GM13977 (cell line): ENCODE measurements at regions of chr18 and their contacts with region 1.

Region 1: GRCh38 chr18:31722369-31722957 is 38.1 kb upstream of the B4GALT6 start:
- DNase-seq: peak; percentile 85
- CTCF ChIP-seq: peak; percentile 84

Region 2: DNA sequence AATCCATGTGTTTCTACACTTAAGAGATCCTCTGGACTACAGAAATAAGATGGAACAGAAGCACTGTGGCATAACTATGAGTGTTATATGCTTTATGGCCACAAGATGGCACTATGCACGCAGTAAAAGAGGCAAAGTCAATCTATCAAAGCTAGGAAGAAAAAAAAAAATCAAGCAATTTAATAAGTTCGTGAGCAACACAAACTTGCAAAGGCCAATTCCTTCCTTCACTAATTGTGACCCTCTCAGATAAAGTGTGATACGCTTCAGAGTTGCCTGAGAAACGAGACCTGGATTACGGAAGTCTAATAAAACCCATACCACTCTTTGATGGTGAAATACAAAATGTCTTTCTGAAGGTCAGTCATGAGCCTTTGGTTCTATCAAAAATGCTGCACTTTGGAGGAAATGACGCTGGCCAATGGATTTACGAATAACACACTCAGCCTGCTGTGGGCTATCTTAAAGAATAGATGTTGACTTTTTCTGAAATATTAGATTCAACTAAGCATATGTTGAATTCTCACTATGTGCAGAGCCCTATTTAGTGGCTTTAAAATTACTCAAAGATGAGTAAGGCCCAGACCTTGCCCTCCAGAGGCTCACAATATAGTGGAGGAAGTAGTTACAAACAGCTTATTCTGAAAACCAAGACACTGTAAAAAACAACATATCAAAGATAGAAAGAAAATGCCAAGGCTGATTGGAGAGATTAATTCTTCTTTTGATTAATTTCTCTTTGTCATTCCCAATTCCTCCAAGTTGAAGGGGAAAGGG is 166.3 kb before region 1 on chr18:
- in situ Hi-C with region 1: loop called (anchors 10 kb)
- DNase-seq: peak; percentile 54
- CTCF ChIP-seq: peak; percentile 72